GM13977 (cell line): ENCODE measurements at regions of chr6 and their contacts with region 1.

Region 1: DNA sequence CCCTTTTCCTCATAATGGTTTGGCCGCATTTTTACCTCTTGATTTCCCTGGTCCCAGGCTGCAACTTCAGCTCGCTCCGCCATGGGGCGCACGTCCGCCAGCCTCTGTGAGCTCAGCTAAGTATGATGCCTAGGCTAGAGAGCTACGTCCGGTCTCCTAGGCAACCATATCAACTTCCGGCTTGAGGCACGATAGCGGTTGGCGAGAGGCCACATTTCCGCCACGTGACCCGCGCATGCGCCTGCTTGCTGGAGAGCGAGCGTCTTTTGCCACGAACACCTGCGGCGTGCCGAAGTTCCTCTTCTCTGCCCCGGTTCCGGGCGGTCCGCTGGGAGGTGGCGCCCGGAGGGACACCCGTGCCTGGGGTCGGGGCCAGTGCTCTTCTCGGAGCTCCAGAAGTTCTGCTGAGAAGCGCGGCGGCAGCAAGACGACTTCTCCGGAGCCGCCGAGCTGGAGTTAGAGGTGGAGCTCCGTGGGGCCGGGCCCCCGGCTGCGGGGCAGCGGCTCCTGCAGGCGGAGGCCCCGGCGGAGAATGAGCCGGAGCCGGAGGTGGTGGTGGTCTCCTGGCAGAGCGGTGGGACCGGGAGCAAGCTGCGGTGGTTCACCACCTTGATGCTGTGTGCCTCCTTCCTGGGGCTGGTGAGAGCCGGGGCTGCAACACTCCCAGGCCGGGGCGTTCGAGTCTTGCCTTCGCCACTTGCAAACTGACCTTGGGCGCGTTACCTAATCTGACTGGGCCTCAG is 172.0 kb downstream of the SLC16A10 start:
- DNase-seq: peak; percentile 98
- CTCF ChIP-seq: peak; percentile 98

Region 2: GRCh38 chr6:111113336-111114086 is 145.7 kb before region 1 on chr6:
- in situ Hi-C with region 1: no loop called
- DNase-seq: no peak
- CTCF ChIP-seq: no peak

Region 3: GRCh38 chr6:111478749-111479148 is 219.5 kb after region 1 on chr6:
- in situ Hi-C with region 1: loop called (anchors 10 kb)
- DNase-seq: peak; percentile 53
- CTCF ChIP-seq: peak; percentile 49

Region 4: DNA sequence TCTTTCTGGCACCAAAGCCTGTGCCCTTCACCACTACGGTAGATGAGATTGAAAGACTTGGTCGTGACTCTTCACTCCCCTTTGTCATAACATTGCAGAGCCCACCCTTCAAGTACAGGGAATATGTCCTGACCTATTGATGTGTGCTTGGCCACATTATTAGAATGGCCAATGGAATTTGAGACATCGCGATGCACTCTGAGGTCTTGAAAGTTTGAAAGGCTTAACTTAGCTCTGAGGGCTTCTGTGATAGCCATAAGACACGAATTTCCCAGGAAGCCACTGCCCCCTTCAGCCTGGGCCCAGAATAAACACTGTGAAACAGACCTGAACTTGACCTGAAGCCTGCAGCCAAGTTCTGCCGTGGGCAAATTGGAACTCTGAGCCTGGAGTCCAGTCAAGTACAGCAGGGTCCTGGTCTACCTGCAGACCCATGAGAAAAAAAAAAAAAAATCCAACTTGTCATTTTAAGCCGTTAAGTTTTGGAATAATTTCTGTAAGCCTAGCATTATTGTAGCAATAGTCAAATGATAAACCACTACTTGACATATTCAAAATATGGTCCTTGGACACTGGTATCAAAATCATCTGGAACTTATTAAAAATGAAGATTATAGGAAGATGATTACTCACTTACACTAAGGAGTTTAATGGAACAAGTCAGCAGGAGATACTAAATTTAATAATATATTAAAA is 383.4 kb after region 1 on chr6:
- in situ Hi-C with region 1: loop called (anchors 10 kb)
- DNase-seq: peak; percentile 64
- CTCF ChIP-seq: peak; percentile 71

Region 5: GRCh38 chr6:111812060-111813038 is 553.1 kb after region 1 on chr6:
- in situ Hi-C with region 1: no loop called
- DNase-seq: no peak
- CTCF ChIP-seq: no peak